Heart right ventricle (tissue), 16 donors: ENCODE measurements at regions of chr17 and their contacts with region 1.

Region 1: DNA sequence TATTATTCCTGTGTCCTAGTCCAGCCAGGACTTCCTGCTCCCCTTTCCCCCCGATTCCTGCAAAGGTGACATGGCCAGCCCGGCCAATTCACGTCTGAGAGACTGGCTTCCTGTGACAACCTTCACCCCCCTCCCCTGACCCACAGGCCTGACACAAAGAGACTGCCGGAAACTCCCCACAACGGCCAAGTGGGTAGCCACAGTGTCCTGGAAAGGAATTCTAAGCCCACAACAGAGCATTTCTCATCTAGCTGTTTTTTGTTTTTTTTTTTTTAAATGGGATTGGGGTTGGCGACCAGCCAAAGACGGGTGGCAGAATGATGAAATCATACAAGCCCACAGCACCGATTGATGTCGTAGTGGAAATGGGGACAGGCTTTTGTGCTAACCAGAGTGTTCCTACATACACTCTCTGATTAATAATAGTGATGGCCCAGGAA is 2.8 kb upstream of the XAF1 start:
- DNase-seq: peak; percentile 65 to 82
- ATAC-seq: peak; percentile 75 to 91 (median 85)
- H3K4me3 ChIP-seq: peak overlapping the region in 1 of 10 donors; percentile 0
- H3K27ac ChIP-seq: peak overlapping the region; percentile 82 to 98 (median 94)
- H3K4me1 ChIP-seq: peaks cover 16 to 62% (median 48%) of the 10 kb centered on the region in 9 donors
- H3K27me3 ChIP-seq: no peaks in the 10 kb centered on the region
- CTCF ChIP-seq: no peak

Region 2: GRCh38 chr17:6843241-6843880 is 90.3 kb after region 1 on chr17:
- intact Hi-C with region 1: loop called in 1 of 10 experiments (anchors 5 kb)
- DNase-seq: no peak
- ATAC-seq: peak in 3 of 8 donors; percentile 62 to 67 (median 67)
- H3K4me3 ChIP-seq: no peak overlapping the region
- H3K27ac ChIP-seq: no peak overlapping the region
- H3K4me1 ChIP-seq: peaks cover 0 to 7% (median 0%) of the 10 kb centered on the region in 9 donors
- H3K27me3 ChIP-seq: peaks cover 0 to 50% (median 30%) of the 10 kb centered on the region in 7 donors
- CTCF ChIP-seq: peak; percentile 22 to 73 (median 63)

Region 3: GRCh38 chr17:7014261-7014994 is 261.4 kb after region 1 on chr17:
- intact Hi-C with region 1: loop called in 5 of 10 experiments (anchors 10 kb)
- DNase-seq: peak; percentile 97 to 99
- ATAC-seq: peak; percentile 87 to 93 (median 90)
- H3K4me3 ChIP-seq: peak overlapping the region; percentile 59 to 98 (median 92)
- H3K27ac ChIP-seq: peak overlapping the region; percentile 87 to 100 (median 96)
- H3K4me1 ChIP-seq: peaks cover 19 to 84% (median 68%) of the 10 kb centered on the region in 9 donors
- H3K27me3 ChIP-seq: no peaks in the 10 kb centered on the region
- CTCF ChIP-seq: peak; percentile 70 to 97 (median 84)